PC-3 (cell line): ENCODE measurements at regions of chr15 and their contacts with region 1.

Region 1: GRCh38 chr15:62060113-62060895 is at the start of gene VPS13C:
- DNase-seq: peak; percentile 89
- ATAC-seq: peak; percentile 91
- H3K4me3 ChIP-seq: peak within 1 kb of the TSS; percentile 94
- H3K27ac ChIP-seq: peak within 1 kb of the TSS; percentile 11; the same call in 1 of the 2 replicates
- H3K4me1 ChIP-seq: peaks cover 13% of the 10 kb centered on the region
- H3K27me3 ChIP-seq: no peaks in the 10 kb centered on the region
- CTCF ChIP-seq: peak; percentile 66
- total RNA-seq, gene VPS13C: 11.3 and 11.4 TPM in 2 replicates

Region 2: DNA sequence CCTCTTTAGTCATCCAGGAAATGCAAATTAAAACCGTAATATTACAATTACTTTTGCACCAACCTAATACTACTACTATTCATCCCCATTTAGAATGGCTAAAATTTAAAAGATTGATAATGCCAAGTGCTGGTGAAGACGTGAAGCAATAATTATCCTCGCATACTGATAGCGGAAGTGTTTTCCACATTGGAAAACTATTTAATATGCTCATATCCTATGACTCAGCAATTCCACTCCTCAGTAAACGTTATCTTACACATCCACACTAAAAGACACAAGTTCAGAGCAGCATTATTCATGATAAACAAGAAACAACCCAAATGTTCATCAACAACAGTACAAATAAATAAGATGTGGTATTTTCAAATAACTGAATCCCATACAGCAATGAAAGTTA is 70.6 kb before region 1 on chr15:
- CTCF ChIA-PET with region 1: no interaction called
- POLR2A ChIA-PET with region 1: no interaction called
- intact Hi-C with region 1: loop called (anchors 10 kb)
- DNase-seq: no peak
- ATAC-seq: no peak
- H3K4me3 ChIP-seq: no peak overlapping the region
- H3K27ac ChIP-seq: no peak overlapping the region
- H3K4me1 ChIP-seq: no peaks in the 10 kb centered on the region
- H3K27me3 ChIP-seq: no peaks in the 10 kb centered on the region
- CTCF ChIP-seq: no peak

Region 3: DNA sequence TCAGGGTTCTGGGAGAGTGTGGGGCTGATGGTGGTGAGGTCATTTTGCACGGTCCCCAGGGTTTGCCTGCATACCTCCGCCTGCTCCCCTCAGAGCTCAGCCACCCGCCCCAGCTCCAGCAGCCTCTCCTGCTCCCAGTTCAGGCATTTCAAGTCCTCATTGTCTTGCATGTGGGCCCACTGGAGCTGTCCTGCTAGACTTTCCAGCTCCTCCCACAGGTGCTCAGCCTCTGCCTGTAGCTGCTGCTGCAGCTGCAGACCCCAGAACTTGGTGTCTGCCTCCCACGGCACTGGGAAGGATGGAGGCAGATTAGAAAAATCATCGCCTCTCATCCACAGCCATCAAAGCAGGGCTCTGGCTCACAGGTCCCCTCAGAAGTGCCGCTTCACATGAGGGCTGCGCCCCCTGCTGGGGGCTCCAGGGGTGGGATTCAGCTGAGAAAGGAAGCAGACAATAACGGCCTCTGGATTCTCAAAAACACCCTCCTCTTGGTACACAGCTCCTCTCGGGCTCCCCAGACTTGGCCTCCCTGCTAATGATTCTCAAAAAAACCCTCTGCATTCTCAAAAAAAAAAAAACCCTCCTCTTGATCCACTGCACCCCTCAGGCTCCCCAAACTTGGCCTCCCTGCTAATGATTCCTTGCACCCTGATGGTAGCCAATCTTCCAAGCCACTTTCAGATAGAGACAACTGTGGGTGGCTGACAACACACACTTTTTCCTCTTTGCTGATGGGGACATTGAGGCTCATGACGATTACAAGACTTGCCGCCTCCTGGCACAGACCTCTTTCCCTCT is 194.0 kb after region 1 on chr15:
- CTCF ChIA-PET with region 1: no interaction called
- POLR2A ChIA-PET with region 1: no interaction called
- intact Hi-C with region 1: no loop called
- DNase-seq: peak; percentile 51
- ATAC-seq: no peak
- H3K4me3 ChIP-seq: no peak overlapping the region
- H3K27ac ChIP-seq: no peak overlapping the region
- H3K4me1 ChIP-seq: no peaks in the 10 kb centered on the region
- H3K27me3 ChIP-seq: no peaks in the 10 kb centered on the region
- CTCF ChIP-seq: peak; percentile 64